ENCODE measurements at regions of chr15 and their contacts with region 1.

Region 1: DNA sequence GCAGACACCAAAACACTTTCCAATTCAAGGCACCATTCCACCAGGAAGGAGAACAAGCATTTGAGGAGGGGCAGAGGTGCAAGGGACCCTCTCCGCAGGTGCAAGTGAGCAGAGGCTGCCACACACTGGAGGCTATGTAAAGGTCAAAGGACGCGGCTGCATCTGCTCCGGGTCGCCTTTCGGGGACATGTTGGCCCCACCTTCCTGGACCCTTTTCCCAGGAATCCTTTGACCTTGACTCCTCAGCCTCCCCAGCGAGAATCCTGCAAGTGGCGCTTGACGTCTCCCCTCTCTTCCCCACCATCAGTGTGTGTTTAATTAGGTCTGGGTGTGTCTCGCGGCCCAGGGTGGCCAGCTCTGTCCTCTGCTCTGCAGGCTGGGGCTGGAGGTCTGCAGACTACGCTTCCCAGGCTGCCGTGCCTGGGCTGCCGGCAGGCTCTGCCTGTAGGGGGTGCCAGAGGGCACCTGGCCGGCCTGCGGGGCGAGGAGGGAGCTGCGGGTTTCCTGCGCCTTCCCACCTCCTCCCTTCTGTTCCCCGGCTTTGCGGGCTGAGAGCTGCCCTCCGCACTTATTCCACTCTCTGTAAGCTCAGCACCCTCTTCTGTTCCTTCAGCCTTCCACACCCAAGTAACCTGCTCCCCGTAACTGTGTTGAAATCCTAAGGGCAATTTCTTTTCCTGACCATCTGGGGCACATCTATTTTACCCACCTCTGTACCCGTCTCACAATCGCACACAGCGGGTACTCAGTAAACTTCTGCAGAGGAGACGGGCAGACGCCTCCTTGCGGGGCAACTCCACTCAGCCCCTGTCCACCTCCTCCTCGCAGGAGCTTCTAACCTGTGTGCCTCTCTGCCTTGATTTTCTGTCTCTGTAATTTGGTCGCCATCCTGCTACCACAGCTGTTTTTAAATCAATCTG is 129.8 kb downstream of the NSMCE3 start:
- DNase-seq: no peak
- ATAC-seq: peak; percentile 79
- H3K4me3 ChIP-seq: no peak overlapping the region
- H3K27ac ChIP-seq: no peak overlapping the region
- H3K4me1 ChIP-seq: no peaks in the 10 kb centered on the region; the same call in 1 of the 2 replicates
- H3K27me3 ChIP-seq: no peaks in the 10 kb centered on the region
- CTCF ChIP-seq: peak; percentile 80 to 97 (median 87)
- EP300 ChIP-seq: no peak
- POLR2A ChIP-seq: no peak
- RAD21 ChIP-seq: peak; percentile 77

Region 2: DNA sequence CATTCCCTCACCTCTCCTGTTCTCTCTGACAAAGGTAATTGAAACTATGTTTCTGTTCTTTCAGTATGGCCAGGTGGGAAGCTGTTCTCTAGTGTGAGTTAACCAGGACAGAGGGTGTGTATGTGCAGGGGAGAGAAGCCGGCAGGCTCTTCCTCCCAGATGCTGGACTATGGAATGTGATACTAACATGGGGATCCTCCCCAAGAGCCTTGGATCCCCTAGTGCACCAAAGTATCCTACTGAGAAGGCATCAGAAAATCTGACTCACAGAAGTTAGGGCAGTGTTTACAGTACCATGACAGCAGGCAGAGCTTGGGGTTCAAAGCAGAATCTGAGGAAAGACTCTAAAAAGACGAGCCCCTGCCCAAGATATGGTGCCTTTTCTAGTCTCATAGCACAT is 131.0 kb before region 1 on chr15:
- CTCF ChIA-PET with region 1: no interaction called
- POLR2A ChIA-PET with region 1: no interaction called
- RAD21 ChIA-PET with region 1: no interaction called
- SMC1A ChIA-PET with region 1: no interaction called
- in situ Hi-C with region 1: no loop called
- intact Hi-C with region 1: no loop called
- DNase-seq: no peak
- ATAC-seq: no peak
- H3K4me3 ChIP-seq: no peak overlapping the region
- H3K27ac ChIP-seq: no peak overlapping the region
- H3K4me1 ChIP-seq: no peaks in the 10 kb centered on the region
- H3K27me3 ChIP-seq: no peaks in the 10 kb centered on the region; a peak in 1 of 4 replicates
- CTCF ChIP-seq: no peak
- EP300 ChIP-seq: no peak
- POLR2A ChIP-seq: no peak
- RAD21 ChIP-seq: no peak

Region 3: GRCh38 chr15:29344474-29344873 is 204.7 kb after region 1 on chr15:
- CTCF ChIA-PET with region 1: interaction called, 12 read pairs
- POLR2A ChIA-PET with region 1: no interaction called
- RAD21 ChIA-PET with region 1: no interaction called
- SMC1A ChIA-PET with region 1: interaction called, 3 read pairs
- in situ Hi-C with region 1: no loop called
- intact Hi-C with region 1: no loop called
- DNase-seq: no peak
- ATAC-seq: peak; percentile 44
- H3K4me3 ChIP-seq: no peak overlapping the region
- H3K27ac ChIP-seq: no peak overlapping the region
- H3K4me1 ChIP-seq: no peaks in the 10 kb centered on the region
- H3K27me3 ChIP-seq: no peaks in the 10 kb centered on the region
- CTCF ChIP-seq: peak in 2 of 3 experiments; percentile 13 to 24; a peak in 1 of 6 replicates
- EP300 ChIP-seq: no peak
- POLR2A ChIP-seq: no peak
- RAD21 ChIP-seq: peak; percentile 52

Region 4: GRCh38 chr15:29740692-29741311 is 601.0 kb after region 1 on chr15:
- CTCF ChIA-PET with region 1: interaction called, 3 read pairs
- POLR2A ChIA-PET with region 1: no interaction called
- RAD21 ChIA-PET with region 1: no interaction called
- SMC1A ChIA-PET with region 1: no interaction called
- in situ Hi-C with region 1: no loop called
- intact Hi-C with region 1: loop called (anchors 5 kb)
- DNase-seq: no peak
- ATAC-seq: peak; percentile 48; the same call in 1 of the 3 replicates
- H3K4me3 ChIP-seq: no peak overlapping the region
- H3K27ac ChIP-seq: no peak overlapping the region
- H3K4me1 ChIP-seq: no peaks in the 10 kb centered on the region
- H3K27me3 ChIP-seq: no peaks in the 10 kb centered on the region
- CTCF ChIP-seq: peak; percentile 36 to 50 (median 45); a peak in 5 of 6 replicates
- EP300 ChIP-seq: no peak
- POLR2A ChIP-seq: no peak
- RAD21 ChIP-seq: peak; percentile 51